Sigmoid colon (tissue), 7 donors: ENCODE measurements at regions of chr9 and their contacts with region 1.

Region 1: GRCh38 chr9:105608721-105609598 is 51.0 kb downstream of the FKTN start:
- DNase-seq: no peak
- H3K4me3 ChIP-seq: no peak overlapping the region
- H3K27ac ChIP-seq: no peak overlapping the region
- H3K4me1 ChIP-seq: no peaks in the 10 kb centered on the region
- H3K27me3 ChIP-seq: no peaks in the 10 kb centered on the region
- CTCF ChIP-seq: peak in 3 of 4 experiments; percentile 20 to 50 (median 37)
- EP300 ChIP-seq: no peak
- POLR2A ChIP-seq: no peak

Region 2: GRCh38 chr9:105647595-105648349 is 38.8 kb after region 1 on chr9:
- intact Hi-C with region 1: no loop called
- DNase-seq: no peak
- H3K4me3 ChIP-seq: no peak overlapping the region
- H3K27ac ChIP-seq: no peak overlapping the region
- H3K4me1 ChIP-seq: no peaks in the 10 kb centered on the region
- H3K27me3 ChIP-seq: no peaks in the 10 kb centered on the region
- CTCF ChIP-seq: no peak
- EP300 ChIP-seq: no peak
- POLR2A ChIP-seq: no peak

Region 3: GRCh38 chr9:105712773-105713172 is 103.8 kb after region 1 on chr9:
- intact Hi-C with region 1: loop called (anchors 10 kb)
- DNase-seq: no peak
- H3K4me3 ChIP-seq: no peak overlapping the region
- H3K27ac ChIP-seq: no peak overlapping the region
- H3K4me1 ChIP-seq: no peaks in the 10 kb centered on the region
- H3K27me3 ChIP-seq: no peaks in the 10 kb centered on the region
- CTCF ChIP-seq: no peak
- EP300 ChIP-seq: no peak
- POLR2A ChIP-seq: no peak

Region 4: GRCh38 chr9:105881654-105882349 is 272.8 kb after region 1 on chr9:
- intact Hi-C with region 1: loop called (anchors 5 kb)
- DNase-seq: no peak
- H3K4me3 ChIP-seq: no peak overlapping the region
- H3K27ac ChIP-seq: no peak overlapping the region
- H3K4me1 ChIP-seq: no peaks in the 10 kb centered on the region
- H3K27me3 ChIP-seq: no peaks in the 10 kb centered on the region
- CTCF ChIP-seq: peak in 3 of 4 experiments; percentile 52 to 78 (median 55)
- EP300 ChIP-seq: no peak
- POLR2A ChIP-seq: no peak